ENCODE measurements at regions of chr4 and their contacts with region 1.

Region 1: DNA sequence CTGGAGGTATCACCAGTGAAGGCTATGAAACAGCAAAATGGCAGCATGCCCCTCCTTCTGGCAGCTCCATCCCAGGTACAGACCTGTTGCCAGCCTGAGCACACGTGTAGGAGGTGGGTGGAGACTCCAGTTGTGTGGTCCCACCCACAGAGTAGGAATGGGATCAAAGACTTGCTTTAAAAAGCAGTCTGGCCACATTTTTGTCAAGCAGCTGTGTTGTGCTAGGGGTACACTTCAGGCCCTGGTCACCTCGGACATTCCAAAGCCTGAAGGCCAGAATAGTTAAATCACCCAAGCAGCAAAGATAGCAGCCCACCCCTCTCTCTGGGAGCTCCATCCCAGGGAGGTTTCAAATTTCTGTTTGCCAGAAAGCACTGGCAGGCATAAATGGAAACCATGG is 20.3 kb upstream of the AMBN start:
- DNase-seq: no peak
- H3K4me3 ChIP-seq: no peak overlapping the region
- H3K27ac ChIP-seq: no peak overlapping the region
- H3K27me3 ChIP-seq: no peaks in the 10 kb centered on the region
- CTCF ChIP-seq: no peak

Region 2: GRCh38 chr4:70559211-70559830 is 12.5 kb before region 1 on chr4:
- CTCF ChIA-PET with region 1: interaction called, 15 read pairs
- POLR2A ChIA-PET with region 1: no interaction called
- DNase-seq: no peak
- H3K4me3 ChIP-seq: no peak overlapping the region
- H3K27ac ChIP-seq: no peak overlapping the region
- H3K27me3 ChIP-seq: no peaks in the 10 kb centered on the region
- CTCF ChIP-seq: peak; percentile 89